ENCODE measurements at regions of chr19 and their contacts with region 1.

Region 1: DNA sequence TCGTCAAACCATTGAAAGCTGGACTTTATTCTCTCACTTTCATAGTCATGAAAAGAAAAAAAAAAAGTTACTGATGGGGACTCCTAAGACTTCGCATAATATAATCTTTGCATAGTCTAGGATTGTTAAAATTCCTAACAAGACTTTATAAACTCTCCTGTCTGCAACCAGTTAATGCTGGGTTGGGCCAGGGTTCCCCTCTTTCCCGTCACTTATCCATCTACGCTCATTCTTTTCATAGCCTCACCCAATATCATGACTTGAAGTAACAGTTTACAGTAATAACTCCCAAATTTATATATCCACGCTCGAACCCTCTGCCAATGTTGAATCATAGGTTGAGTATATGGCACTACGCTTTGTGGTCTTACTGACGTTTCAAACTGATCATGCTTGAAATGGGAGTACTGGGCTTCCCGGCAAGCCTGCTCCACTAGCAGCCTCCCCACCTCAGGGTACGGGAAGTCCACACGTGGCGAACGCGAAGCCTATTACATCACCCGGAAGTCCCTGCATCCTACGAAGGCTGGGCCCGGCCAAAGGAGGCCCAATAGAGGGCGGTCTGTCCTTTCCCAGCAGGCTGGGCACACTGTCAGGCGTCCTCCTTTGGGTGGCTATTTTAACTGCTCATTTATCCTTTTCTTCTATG is 743 bp upstream of the ZNF460 start:
- DNase-seq: peak; percentile 92
- ATAC-seq: peak; percentile 74
- H3K4me3 Mint-ChIP-seq: no peak overlapping the region
- H3K27ac Mint-ChIP-seq: no peak overlapping the region
- H3K4me1 Mint-ChIP-seq: peaks cover 31% of the 10 kb centered on the region
- H3K27me3 Mint-ChIP-seq: no peaks in the 10 kb centered on the region

Region 2: GRCh38 chr19:56393119-56394012 is 886.2 kb before region 1 on chr19 and contains the start of gene ZNF582:
- CTCF ChIA-PET with region 1: no interaction called
- POLR2A ChIA-PET with region 1: no interaction called
- intact Hi-C with region 1: loop called in 1 of 2 experiments (anchors 1 kb)
- DNase-seq: peak; percentile 97
- ATAC-seq: peak; percentile 99
- H3K4me3 Mint-ChIP-seq: peak within 1 kb of the TSS; percentile 84
- H3K27ac Mint-ChIP-seq: peak within 1 kb of the TSS; percentile 96
- H3K4me1 Mint-ChIP-seq: peaks cover 11% of the 10 kb centered on the region
- H3K27me3 Mint-ChIP-seq: no peaks in the 10 kb centered on the region
- total RNA-seq, gene ZNF582: 0.98 to 1.8 TPM

Region 3: GRCh38 chr19:57240311-57241090 is 39.0 kb before region 1 on chr19 and contains the start of gene ZNF805:
- CTCF ChIA-PET with region 1: interaction called, 3 read pairs
- POLR2A ChIA-PET with region 1: no interaction called
- intact Hi-C with region 1: loop called (anchors 1 kb)
- DNase-seq: peak; percentile 97
- ATAC-seq: peak; percentile 95
- H3K4me3 Mint-ChIP-seq: peak within 1 kb of the TSS; percentile 80
- H3K27ac Mint-ChIP-seq: peak within 1 kb of the TSS; percentile 92
- H3K4me1 Mint-ChIP-seq: peaks cover 23% of the 10 kb centered on the region
- H3K27me3 Mint-ChIP-seq: no peaks in the 10 kb centered on the region
- total RNA-seq, gene ZNF805: 6.4 to 7.1 TPM

Region 4: DNA sequence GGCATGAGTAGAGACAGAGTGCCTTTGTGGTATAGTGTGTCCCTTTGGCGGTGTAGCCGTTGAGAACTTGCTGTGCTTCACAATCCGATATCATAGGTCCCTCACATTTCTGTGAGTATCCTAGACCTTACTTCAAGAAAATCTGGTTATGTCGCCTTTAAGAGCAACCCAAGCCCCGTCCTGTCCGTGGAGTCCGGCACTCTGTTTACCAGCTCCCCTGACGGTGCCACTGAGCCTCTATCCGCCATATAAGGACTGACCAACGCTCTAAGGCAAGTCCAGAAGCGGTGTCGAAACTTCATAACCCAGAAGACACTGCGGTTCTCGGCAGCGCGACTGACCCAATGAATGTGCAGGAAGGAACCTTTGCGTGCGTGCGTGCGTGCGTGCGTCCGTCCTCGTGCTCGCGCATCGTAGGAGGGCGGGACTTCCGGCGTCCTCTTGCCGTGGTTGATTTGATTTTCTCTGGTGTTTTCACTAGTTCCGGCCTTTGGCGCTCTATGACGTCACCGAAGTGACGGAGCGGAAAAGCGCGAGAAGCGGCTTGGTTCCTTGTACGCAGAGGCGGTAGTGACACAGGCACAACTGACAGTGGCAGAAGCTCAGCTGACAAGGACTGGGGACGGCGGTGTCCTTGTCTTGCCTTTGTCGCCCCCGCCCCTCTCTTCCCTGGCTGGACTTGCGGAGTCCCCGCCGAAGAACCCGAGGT is 83.6 kb after region 1 on chr19 and contains the starts of genes TRAPPC2B and ZNF547:
- CTCF ChIA-PET with region 1: no interaction called
- POLR2A ChIA-PET with region 1: no interaction called
- intact Hi-C with region 1: loop called (anchors 1 kb)
- DNase-seq: peak; percentile 99
- ATAC-seq: peak; percentile 98
- H3K4me3 Mint-ChIP-seq: peak within 1 kb of the TSS; percentile 86
- H3K27ac Mint-ChIP-seq: peak within 1 kb of the TSS; percentile 94
- H3K4me1 Mint-ChIP-seq: peaks cover 13% of the 10 kb centered on the region
- H3K27me3 Mint-ChIP-seq: no peaks in the 10 kb centered on the region
- total RNA-seq, gene TRAPPC2B: 3.2 to 6.1 TPM
- total RNA-seq, gene ZNF547: 1.5 to 1.7 TPM

Region 5: DNA sequence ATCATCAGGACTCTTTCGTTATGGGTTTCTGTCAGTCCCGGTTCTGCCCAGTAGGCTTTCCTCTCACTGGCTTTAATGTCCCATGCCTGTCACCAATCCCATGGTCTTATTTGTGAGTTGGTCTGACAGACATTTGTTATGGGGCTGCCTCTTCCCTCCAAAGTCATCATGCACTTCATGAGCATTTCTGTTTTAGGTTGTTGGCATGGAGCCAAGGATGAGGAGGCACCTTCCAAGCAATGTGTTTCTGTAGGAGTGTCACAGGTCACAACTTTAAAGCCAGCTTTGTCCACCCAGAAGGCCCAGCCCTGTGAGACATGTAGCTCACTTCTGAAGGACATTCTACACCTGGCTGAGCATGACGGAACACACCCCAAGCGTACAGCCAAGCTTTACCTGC is 139.9 kb after region 1 on chr19:
- CTCF ChIA-PET with region 1: no interaction called
- POLR2A ChIA-PET with region 1: no interaction called
- intact Hi-C with region 1: no loop called
- DNase-seq: no peak
- ATAC-seq: no peak
- H3K4me3 Mint-ChIP-seq: no peak overlapping the region
- H3K27ac Mint-ChIP-seq: no peak overlapping the region
- H3K4me1 Mint-ChIP-seq: no peaks in the 10 kb centered on the region
- H3K27me3 Mint-ChIP-seq: no peaks in the 10 kb centered on the region

Region 6: GRCh38 chr19:57527136-57527881 is 247.8 kb after region 1 on chr19 and contains the start of gene ZNF549:
- CTCF ChIA-PET with region 1: no interaction called
- POLR2A ChIA-PET with region 1: no interaction called
- intact Hi-C with region 1: loop called in 1 of 2 experiments (anchors 1 kb)
- DNase-seq: peak; percentile 93
- ATAC-seq: peak; percentile 100
- H3K4me3 Mint-ChIP-seq: peak within 1 kb of the TSS; percentile 82
- H3K27ac Mint-ChIP-seq: peak within 1 kb of the TSS; percentile 84
- H3K4me1 Mint-ChIP-seq: peaks cover 18% of the 10 kb centered on the region
- H3K27me3 Mint-ChIP-seq: no peaks in the 10 kb centered on the region
- total RNA-seq, gene ZNF549: 3.7 to 4.6 TPM

Region 7: DNA sequence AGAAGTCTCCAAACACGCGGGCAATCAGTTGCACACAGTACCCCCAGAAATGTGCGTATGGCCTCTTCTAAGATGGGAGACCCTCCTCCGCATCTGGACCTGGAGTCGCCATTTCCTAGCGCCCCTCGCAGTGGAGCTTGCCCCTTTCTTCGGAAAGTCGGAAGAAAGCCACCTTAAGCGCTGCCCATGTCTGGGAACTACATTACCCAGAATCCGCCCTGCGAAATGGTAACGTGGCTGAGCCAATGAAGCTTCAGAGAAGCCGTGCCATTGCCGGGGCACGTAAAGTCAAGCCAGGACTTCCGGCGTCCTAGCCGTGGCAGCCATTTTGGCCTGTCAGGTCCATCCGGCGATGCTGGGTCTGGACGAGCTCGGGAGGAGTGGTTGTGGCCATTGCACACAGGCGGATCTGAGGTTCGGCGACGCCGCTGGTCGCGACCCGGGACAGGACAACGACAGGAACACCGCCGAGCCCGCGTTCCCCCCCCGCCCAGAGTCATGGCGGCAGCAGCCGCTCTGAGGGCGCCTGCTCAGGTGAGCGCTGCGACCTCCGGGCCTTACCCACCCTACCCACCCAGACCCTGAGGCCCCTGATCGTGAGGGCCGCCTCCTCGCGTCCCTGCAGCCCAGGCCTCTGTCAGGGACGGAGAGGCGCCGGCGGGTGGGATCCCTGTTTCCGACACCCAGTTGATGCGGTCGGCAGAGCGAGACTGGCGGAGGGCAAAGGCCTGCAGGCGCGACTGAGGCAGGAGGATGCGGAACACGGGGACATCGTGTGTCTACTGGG is 490.0 kb after region 1 on chr19 and contains the start of gene ZNF586:
- CTCF ChIA-PET with region 1: no interaction called
- POLR2A ChIA-PET with region 1: no interaction called
- intact Hi-C with region 1: loop called in 1 of 2 experiments (anchors 1 kb)
- DNase-seq: peak; percentile 93
- ATAC-seq: peak; percentile 99
- H3K4me3 Mint-ChIP-seq: peak within 1 kb of the TSS; percentile 90
- H3K27ac Mint-ChIP-seq: peak within 1 kb of the TSS; percentile 93
- H3K4me1 Mint-ChIP-seq: peaks cover 25% of the 10 kb centered on the region
- H3K27me3 Mint-ChIP-seq: no peaks in the 10 kb centered on the region
- total RNA-seq, gene ZNF586: 20.3 to 20.5 TPM